Vagina (tissue), 2 donors: ENCODE measurements at regions of chr2 and their contacts with region 1.

Region 1: GRCh38 chr2:208254871-208255556 is at the start of gene IDH1:
- DNase-seq: peak in 1 of 2 donors; percentile 93
- H3K4me3 ChIP-seq: peak within 1 kb of the TSS; percentile 82 to 90
- H3K27ac ChIP-seq: peak within 1 kb of the TSS; percentile 78
- H3K4me1 ChIP-seq: peaks cover 29% of the 10 kb centered on the region
- H3K27me3 ChIP-seq: no peaks in the 10 kb centered on the region
- CTCF ChIP-seq: no peak
- POLR2A ChIP-seq: peak in 1 of 2 donors; percentile 38
- total RNA-seq, gene IDH1: 47.4 TPM

Region 2: GRCh38 chr2:208175069-208175839 is 79.8 kb before region 1 on chr2:
- intact Hi-C with region 1: loop called (anchors 10 kb)
- DNase-seq: no peak
- H3K4me3 ChIP-seq: no peak overlapping the region
- H3K27ac ChIP-seq: no peak overlapping the region
- H3K4me1 ChIP-seq: no peaks in the 10 kb centered on the region
- H3K27me3 ChIP-seq: no peaks in the 10 kb centered on the region
- CTCF ChIP-seq: peak; percentile 48 to 68 (median 57)
- POLR2A ChIP-seq: no peak

Region 3: GRCh38 chr2:208479342-208479741 is 224.3 kb after region 1 on chr2:
- intact Hi-C with region 1: no loop called
- DNase-seq: no peak
- H3K4me3 ChIP-seq: no peak overlapping the region
- H3K27ac ChIP-seq: no peak overlapping the region
- H3K4me1 ChIP-seq: no peaks in the 10 kb centered on the region
- H3K27me3 ChIP-seq: no peaks in the 10 kb centered on the region
- CTCF ChIP-seq: no peak
- POLR2A ChIP-seq: no peak